HEK293 (cell line): ENCODE measurements at regions of chr3 and their contacts with region 1.

Region 1: GRCh38 chr3:10758304-10759061 is 57.5 kb upstream of the SLC6A11 start:
- H3K4me3 ChIP-seq: no peak overlapping the region
- H3K27ac ChIP-seq: no peak overlapping the region
- H3K4me1 ChIP-seq: no peaks in the 10 kb centered on the region
- CTCF ChIP-seq: peak; percentile 91

Region 2: GRCh38 chr3:10619989-10620832 is 138.3 kb before region 1 on chr3:
- CTCF ChIA-PET with region 1: no interaction called
- POLR2A ChIA-PET with region 1: no interaction called
- H3K4me3 ChIP-seq: no peak overlapping the region
- H3K27ac ChIP-seq: no peak overlapping the region
- H3K4me1 ChIP-seq: no peaks in the 10 kb centered on the region
- CTCF ChIP-seq: no peak

Region 3: DNA sequence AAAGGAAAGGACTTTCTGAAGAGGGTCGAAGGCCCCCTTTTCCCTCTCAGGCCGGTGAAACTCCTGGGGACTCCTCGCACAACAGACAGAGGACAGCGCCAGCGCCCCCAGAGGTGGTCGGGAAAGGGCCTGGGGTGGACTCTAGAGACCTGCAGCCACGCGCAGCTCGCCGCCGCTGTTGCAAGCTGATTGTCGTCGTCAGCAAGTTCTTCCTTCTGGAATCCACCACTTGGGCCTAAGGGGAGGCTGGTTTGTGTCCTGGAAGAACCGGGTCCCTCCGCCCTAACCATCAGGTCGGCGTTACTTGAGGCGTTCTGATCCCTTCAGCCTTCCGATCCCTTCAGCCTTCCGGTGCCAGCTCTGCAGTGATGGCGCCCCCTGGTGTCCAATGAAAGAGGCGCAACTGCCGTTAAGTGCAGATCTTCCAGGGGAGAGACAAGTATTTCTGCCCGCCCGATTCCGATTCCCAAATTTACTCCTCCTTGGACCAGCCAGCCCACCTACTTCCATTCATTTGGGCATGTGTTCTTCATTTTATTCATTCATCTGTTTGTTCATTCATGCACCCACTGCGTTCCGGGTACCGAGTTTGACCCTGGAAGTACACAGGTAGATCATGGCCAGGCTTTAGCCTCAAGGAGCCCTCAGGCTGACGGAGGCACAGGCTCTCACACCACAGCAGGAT is 19.7 kb before region 1 on chr3:
- CTCF ChIA-PET with region 1: interaction called, 15 read pairs
- POLR2A ChIA-PET with region 1: no interaction called
- H3K4me3 ChIP-seq: peak overlapping the region; percentile 51
- H3K27ac ChIP-seq: no peak overlapping the region
- H3K4me1 ChIP-seq: no peaks in the 10 kb centered on the region
- CTCF ChIP-seq: peak; percentile 94

Region 4: GRCh38 chr3:10748040-10748439 is 10.4 kb before region 1 on chr3:
- CTCF ChIA-PET with region 1: interaction called, 27 read pairs
- POLR2A ChIA-PET with region 1: no interaction called
- H3K4me3 ChIP-seq: no peak overlapping the region
- H3K27ac ChIP-seq: no peak overlapping the region
- H3K4me1 ChIP-seq: no peaks in the 10 kb centered on the region; the same call in 1 of the 2 replicates
- CTCF ChIP-seq: no peak

Region 5: DNA sequence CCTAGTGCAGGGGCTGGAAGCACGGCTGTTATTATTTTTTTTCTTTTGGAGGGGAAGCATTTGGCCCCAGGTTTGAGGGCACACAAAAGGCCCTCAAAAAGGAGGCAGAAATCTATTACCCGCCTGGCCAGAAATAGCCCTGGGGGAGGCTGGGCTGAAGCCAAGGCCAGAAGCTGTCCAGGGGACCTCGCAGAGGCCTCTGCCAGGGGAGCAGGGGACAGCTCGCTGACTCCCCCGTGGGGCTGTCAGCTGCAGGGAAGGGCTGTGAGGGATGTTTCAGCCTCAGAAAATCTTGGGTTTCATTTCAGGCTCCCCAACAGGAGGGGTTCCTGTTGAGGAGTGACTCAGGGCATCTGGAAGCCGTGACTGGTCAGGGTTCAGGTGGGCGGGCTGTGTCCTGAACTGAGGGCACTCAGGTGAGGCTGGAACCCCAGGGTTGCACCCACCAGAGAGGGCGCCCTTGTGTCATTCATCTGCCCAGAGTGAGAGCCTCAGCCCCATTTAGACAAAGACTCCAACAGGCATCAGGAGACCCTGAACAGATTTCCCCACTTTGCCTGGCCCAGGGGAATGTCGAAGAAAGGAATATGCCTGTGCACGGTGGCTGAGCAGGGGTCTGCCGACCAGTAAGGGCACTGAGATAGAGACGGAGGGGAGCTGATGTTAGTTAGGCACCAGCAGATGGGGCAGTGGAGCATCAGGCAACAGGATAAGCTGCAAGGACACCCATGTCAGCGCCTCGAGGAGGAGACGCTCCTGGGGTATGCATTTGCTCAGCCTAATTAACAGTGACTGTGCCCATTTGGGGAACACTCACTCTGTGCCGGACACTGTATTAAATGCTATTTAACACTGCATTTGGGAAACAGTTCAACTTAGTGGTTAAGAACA is 14.0 kb after region 1 on chr3:
- CTCF ChIA-PET with region 1: interaction called, 32 read pairs
- POLR2A ChIA-PET with region 1: no interaction called
- H3K4me3 ChIP-seq: no peak overlapping the region
- H3K27ac ChIP-seq: no peak overlapping the region
- H3K4me1 ChIP-seq: no peaks in the 10 kb centered on the region
- CTCF ChIP-seq: peak; percentile 54

Region 6: DNA sequence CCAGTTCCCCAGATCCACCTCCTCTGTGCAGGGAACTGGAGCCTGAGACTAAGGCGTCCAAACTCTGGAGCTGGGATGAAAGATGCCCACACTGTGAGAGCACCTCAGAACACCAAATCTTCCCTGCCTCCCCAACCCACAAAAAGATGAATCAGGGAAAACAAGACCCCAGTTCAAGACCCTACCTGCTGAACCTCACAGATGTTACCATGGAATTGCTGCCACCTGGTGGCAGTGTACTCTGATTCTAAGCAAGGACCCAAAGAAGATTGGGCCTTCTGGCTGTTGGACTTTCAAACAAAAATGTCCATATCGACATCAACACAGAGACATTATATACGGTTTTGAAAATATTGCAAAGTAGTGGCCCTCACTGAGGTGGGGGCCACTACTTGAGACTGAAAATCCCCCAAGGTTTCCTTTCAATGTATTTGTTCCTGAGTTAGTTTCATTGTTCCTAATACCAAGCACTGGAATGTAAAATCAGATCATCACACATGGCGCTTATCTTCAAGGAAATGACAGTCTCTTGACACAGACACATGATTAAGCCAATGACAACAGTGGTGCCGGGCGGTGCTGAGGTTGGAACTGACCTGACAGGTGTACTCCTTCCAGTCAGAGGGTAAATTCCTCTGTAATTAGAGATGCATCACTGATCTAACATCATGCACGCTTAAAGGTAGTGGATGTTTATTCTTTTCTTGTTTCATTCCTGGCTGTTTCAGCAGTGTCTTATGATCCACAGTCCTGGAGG is 125.2 kb after region 1 on chr3:
- CTCF ChIA-PET with region 1: interaction called, 59 read pairs
- POLR2A ChIA-PET with region 1: no interaction called
- H3K4me3 ChIP-seq: no peak overlapping the region
- H3K27ac ChIP-seq: no peak overlapping the region
- H3K4me1 ChIP-seq: no peaks in the 10 kb centered on the region
- CTCF ChIP-seq: peak; percentile 51; the same call in 1 of the 2 replicates

Region 7: GRCh38 chr3:10945683-10946287 is 187.3 kb after region 1 on chr3:
- CTCF ChIA-PET with region 1: interaction called, 21 read pairs
- POLR2A ChIA-PET with region 1: no interaction called
- H3K4me3 ChIP-seq: no peak overlapping the region
- H3K27ac ChIP-seq: no peak overlapping the region
- H3K4me1 ChIP-seq: no peaks in the 10 kb centered on the region
- CTCF ChIP-seq: peak; percentile 77

Region 8: DNA sequence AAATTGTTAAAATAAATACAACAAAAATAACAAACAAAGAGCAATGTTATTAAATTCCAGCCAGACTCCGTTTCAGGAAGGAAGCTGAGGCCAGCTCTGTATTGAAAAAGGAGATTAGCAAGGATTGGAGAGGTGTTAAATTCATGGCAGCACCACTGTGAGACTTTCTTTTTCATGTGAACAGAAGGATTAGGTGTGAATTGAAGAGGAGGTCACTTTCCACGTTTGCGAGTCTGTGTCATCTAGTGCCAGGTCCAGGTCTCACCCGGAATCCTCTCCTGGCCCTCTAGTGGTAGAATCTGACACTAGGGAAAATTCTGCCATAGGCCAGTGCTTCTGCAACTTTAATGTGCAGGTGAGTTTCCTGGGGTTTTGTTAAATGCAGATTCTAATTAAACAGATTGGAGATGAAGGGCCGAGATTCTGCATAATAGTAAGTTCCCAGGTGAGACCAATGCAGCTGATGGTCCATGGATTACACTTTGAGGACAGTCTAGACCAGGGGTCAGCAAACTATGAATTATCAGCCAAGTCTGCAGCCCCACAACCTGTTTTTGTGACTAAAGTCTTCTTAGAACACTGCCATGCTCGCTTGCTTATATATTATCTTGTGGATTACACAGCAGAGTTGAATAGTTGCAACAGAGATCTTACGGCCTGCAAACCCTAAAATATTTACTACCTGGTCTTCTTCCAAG is 224.9 kb after region 1 on chr3:
- CTCF ChIA-PET with region 1: interaction called, 11 read pairs
- POLR2A ChIA-PET with region 1: no interaction called
- H3K4me3 ChIP-seq: no peak overlapping the region
- H3K27ac ChIP-seq: no peak overlapping the region
- H3K4me1 ChIP-seq: peaks cover 2% of the 10 kb centered on the region; the same call in 1 of the 2 replicates
- CTCF ChIP-seq: peak; percentile 67; the same call in 1 of the 2 replicates